Calu3 (cell line): ENCODE measurements at regions of chr21 and their contacts with region 1.

Region 1: DNA sequence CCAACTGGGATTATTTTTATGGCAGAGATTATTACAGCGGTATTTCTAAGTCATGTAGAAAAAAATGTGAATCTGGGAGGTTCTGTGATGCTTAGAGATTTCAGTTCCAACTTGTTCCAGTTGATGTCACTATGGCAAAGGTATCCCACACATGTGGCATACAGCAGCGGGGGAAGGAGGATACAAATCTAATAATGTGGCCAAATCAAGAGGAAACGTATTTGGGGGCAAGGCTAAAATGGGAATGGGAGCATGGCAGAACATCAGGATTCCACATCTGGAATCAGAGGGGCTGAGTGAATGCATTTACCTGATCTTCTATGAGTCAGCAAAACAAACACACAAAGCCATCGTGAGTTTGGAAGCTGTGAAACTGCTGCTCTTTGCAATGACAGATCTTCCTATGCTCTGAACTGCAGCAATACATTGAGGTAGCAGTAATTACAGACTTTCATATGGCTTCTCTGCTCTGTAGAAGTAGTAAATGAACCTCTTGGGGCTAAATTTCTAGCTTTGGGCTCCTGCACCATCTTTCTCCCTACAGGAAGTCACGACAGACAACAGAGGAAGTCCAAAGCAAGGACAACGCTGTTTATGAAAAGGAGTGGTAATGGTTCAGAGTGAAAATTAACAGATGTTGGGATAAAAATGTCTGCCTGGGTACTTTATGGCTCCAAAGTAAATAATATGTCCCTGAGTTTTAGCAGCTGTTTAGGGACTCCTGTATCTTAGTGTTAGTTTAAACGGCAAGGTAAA is 55.5 kb downstream of the GABPA start:
- DNase-seq: peak; percentile 21
- H3K4me3 Mint-ChIP-seq: peak overlapping the region; percentile 68
- H3K27ac Mint-ChIP-seq: peak overlapping the region; percentile 71
- H3K4me1 Mint-ChIP-seq: no peaks in the 10 kb centered on the region
- H3K27me3 Mint-ChIP-seq: peaks cover 3% of the 10 kb centered on the region
- CTCF ChIP-seq: no peak

Region 2: DNA sequence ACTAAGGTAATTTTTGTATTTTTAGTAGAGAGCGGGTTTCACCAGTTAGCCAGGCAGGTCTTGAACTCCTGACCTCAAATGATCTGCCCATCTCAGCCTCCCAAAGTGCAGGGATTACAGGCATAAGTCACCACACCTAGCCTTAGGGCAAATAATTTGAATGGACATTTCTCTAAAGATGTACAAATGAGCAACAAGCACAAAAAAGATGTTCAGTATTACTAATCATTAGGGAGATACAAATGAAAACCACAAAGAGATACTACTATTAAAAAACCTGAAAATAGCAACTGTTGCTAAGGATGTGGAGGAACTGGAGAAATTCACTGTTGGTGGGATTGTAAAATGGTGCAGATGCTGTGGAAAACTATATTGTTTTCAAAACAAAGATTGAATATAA is 23.6 kb after region 1 on chr21:
- CTCF ChIA-PET with region 1: no interaction called
- intact Hi-C with region 1: no loop called
- DNase-seq: no peak
- H3K4me3 Mint-ChIP-seq: no peak overlapping the region
- H3K27ac Mint-ChIP-seq: no peak overlapping the region
- H3K4me1 Mint-ChIP-seq: no peaks in the 10 kb centered on the region
- H3K27me3 Mint-ChIP-seq: no peaks in the 10 kb centered on the region
- CTCF ChIP-seq: no peak

Region 3: GRCh38 chr21:25862596-25862995 is 72.3 kb after region 1 on chr21:
- CTCF ChIA-PET with region 1: no interaction called
- intact Hi-C with region 1: loop called (anchors 5 kb)
- DNase-seq: peak; percentile 3
- H3K4me3 Mint-ChIP-seq: no peak overlapping the region
- H3K27ac Mint-ChIP-seq: no peak overlapping the region
- H3K4me1 Mint-ChIP-seq: no peaks in the 10 kb centered on the region
- H3K27me3 Mint-ChIP-seq: no peaks in the 10 kb centered on the region
- CTCF ChIP-seq: peak; percentile 38